Adrenal gland (tissue), 19 donors: ENCODE measurements at regions of chr12 and their contacts with region 1.

Region 1: GRCh38 chr12:109775172-109775881 is 57.9 kb downstream of the TRPV4 start:
- DNase-seq: peak; percentile 74 to 89 (median 81)
- H3K4me3 ChIP-seq: no peak overlapping the region
- H3K27ac ChIP-seq: no peak overlapping the region
- H3K4me1 ChIP-seq: peaks cover 0 to 20% of the 10 kb centered on the region in 2 donors
- H3K27me3 ChIP-seq: no peaks in the 10 kb centered on the region
- CTCF ChIP-seq: peak; percentile 73 to 91 (median 88)
- POLR2A ChIP-seq: no peak

Region 2: DNA sequence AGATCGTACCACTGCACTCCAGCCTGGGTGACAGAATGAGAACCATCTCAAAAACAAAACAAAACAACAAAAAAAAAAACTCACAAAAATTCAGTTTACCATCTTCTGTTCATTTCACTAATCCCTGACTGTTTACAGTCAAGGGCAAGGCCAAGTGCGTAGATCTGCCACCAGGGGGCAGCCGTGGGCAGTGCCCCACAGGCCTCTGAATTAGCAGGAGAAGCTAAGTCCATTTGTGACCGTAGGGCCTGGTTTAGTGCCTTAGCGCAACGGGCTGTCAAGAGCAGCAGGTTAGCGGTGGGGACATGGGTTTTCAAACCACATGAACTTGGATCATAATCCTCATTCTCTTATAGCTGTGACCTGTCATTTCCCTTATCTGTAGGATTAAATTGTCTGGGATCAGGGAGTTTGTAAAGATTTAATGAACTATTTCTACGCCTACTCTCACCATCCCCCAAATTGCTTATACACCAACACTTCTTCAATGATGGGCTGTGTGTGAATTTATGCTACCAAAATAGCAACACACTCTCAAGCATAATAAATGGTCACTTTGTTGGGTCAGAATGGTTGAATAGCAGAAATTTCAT is 347.2 kb before region 1 on chr12:
- intact Hi-C with region 1: loop called in 1 of 2 experiments (anchors 10 kb)
- DNase-seq: peak; percentile 76 to 93 (median 82)
- H3K4me3 ChIP-seq: no peak overlapping the region
- H3K27ac ChIP-seq: no peak overlapping the region
- H3K4me1 ChIP-seq: no peaks in the 10 kb centered on the region
- H3K27me3 ChIP-seq: no peaks in the 10 kb centered on the region
- CTCF ChIP-seq: peak; percentile 74 to 99 (median 90)
- POLR2A ChIP-seq: no peak

Region 3: DNA sequence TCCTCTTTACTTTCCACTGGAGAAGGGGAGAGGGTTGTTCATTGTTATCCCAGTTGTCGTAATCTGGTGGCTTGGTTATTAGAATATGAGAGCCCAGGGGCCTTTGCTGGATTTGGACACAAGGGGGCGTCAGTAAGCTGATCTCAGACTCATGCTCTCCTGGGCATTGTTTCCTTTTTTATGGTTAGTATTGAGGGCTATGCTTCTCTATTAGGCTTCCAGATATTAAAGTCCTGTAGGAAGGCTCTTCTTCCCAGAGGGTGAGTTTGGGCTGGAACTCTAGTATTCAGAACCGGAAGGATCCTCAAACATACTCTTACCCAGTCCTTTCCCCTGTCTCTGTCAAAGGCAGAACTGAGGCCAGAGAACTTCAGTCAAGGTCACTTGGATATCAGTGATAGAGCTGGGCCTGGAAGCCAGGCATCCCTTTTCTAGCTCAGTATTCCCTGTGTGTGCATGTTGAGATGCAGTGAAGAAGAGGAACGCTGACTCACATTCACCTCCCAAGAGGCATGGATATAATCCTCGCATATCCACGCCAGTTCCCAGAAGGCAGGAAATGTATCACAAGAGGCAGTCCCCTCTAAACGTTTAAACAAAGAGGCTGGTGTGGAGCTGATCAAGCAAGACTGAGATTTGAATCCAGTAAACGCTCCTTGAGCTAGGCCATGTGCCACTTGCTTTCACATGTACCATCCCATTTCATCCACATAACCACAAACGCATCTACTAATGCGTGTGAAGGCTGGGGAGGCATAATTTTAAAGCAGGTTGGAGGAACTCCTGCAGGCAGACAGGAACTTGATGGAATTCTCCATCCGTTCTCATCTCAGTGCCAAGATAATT is 256.3 kb before region 1 on chr12:
- intact Hi-C with region 1: loop called (anchors 5 to 10 kb)
- DNase-seq: peak; percentile 60 to 92 (median 75)
- H3K4me3 ChIP-seq: no peak overlapping the region
- H3K27ac ChIP-seq: peak overlapping the region in 2 of 5 donors; percentile 29 to 46
- H3K4me1 ChIP-seq: peaks cover 0 to 14% of the 10 kb centered on the region in 2 donors
- H3K27me3 ChIP-seq: no peaks in the 10 kb centered on the region
- CTCF ChIP-seq: peak; percentile 76 to 88 (median 80)
- POLR2A ChIP-seq: no peak

Region 4: DNA sequence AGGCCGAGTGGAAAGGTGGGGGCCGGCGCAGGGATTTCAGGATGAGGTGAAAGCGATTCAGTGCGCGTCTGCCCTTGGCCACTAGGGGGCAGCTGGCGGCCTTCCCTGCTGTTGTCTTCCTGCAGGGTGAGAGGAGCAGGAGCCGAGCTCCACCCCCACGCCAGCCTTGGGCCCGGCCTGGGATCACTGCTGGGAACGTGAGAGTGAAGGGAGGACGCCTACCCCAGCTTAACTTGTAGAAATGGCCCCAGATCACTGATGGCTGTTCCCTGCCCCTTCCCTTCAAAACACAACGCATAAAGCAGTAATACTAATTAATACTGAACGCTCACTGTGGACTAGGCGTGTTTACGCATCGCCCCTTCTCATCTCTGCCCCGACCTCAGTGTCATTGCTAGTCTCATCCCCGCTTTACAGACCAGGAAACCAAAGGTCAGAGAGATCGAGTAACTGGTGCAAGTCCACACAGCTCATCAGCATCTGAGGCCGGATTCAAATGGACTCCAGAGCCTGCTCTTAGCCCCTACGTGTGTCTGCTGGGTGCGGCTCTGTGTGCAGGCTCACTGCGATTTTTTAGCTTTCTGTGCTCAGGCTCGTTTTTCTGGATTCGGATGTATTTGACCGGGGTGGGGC is 177.4 kb before region 1 on chr12:
- intact Hi-C with region 1: loop called (anchors 2 kb)
- DNase-seq: peak; percentile 89 to 95 (median 93)
- H3K4me3 ChIP-seq: no peak overlapping the region
- H3K27ac ChIP-seq: peak overlapping the region in 1 of 5 donors; percentile 12
- H3K4me1 ChIP-seq: peaks cover 0 to 5% of the 10 kb centered on the region in 2 donors
- H3K27me3 ChIP-seq: no peaks in the 10 kb centered on the region
- CTCF ChIP-seq: peak; percentile 96 to 98 (median 96)
- POLR2A ChIP-seq: no peak

Region 5: DNA sequence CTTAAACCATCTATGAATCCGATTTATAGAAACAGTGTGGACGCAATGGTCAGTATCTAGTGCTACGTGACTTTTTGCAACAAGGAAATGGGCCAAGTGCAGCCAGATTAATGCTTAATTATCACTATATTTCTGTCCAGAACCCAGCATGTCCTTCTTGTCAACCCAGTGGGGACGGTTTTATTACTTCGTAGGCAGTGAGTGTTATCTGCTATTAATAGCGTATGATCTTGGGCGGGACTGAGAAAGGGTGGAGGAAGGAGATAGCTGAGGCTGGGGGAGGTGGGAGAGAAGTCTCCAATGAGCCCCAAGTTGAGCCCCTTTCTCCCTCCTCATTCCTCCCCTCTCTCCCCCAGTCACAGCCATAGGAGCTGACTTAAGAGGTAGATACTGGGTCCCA is 121.4 kb before region 1 on chr12:
- intact Hi-C with region 1: no loop called
- DNase-seq: no peak
- H3K4me3 ChIP-seq: no peak overlapping the region
- H3K27ac ChIP-seq: no peak overlapping the region
- H3K4me1 ChIP-seq: no peaks in the 10 kb centered on the region
- H3K27me3 ChIP-seq: no peaks in the 10 kb centered on the region
- CTCF ChIP-seq: no peak
- POLR2A ChIP-seq: no peak

Region 6: DNA sequence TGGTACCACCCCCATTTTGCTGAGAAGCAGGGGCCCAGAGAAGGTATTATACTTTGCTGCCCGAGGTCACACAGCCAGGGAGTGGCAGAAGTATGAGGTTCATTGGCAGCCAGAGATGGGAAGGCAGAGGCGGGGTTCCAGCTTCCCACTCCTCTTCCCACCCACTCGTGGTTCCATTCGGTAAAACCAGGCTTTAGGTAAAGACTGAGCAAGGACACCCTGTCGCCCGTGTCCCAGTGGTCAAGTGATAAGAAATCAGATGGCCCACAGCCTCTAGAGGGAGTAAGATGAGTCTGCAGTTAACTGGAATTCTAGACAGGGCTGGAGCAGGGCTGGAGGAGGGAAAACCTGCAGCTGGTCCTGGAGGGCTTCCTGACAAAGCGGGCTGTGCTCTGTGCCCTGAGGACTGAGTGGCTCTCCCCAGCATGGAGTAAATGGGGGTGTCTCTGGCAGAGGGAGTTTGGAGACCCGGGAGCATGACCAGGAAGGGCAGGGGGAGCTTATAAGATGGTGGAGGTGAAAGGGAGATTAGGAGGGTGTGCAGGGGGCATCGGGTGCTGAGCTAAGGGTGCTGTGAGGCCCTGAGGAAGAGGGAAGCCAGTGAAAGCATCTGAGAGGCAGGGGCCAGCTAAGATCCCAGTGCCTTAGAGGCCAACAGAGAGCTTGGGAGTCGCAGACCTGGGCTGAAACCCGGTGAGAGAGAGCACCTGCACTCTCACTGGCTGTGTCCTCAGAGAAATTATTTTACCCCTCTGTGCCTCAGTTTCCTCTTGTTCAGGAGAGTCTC is 55.9 kb before region 1 on chr12:
- intact Hi-C with region 1: loop called in 1 of 2 experiments (anchors 5 kb)
- DNase-seq: peak in 6 of 7 donors; percentile 54 to 81 (median 68)
- H3K4me3 ChIP-seq: no peak overlapping the region
- H3K27ac ChIP-seq: peak overlapping the region in 4 of 5 donors; percentile 64 to 89 (median 85)
- H3K4me1 ChIP-seq: peaks cover 70 to 91% of the 10 kb centered on the region in 2 donors
- H3K27me3 ChIP-seq: no peaks in the 10 kb centered on the region
- CTCF ChIP-seq: peak; percentile 24 to 57 (median 42)
- POLR2A ChIP-seq: peak in 1 of 2 donors; percentile 48

Region 7: DNA sequence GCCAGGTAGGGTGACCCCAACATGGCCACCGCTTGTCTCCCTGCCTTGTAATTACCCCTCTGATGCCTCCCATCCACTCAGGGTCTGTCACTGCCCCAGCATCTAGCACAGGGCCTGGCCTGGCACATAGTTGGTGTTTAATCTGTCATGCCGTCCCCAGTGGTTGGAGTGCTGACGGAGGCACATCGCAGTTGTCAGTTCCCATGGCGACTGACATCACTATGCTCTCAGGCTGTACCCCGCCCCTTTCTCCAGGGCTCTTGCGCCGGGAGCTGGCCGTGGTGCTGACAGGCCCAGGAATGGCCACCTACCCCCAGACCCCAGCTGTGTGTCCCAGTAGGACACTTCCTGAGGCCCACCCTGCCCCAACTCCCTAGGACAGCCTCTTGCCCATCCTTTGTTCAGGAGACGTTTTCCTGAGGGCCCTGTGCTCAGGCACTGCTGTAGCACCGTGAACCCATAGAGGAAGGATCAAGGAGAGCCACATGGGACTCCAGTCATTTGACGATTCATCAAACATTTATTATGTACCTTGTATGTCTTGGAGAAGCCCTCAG is 38.7 kb before region 1 on chr12:
- intact Hi-C with region 1: no loop called
- DNase-seq: peak; percentile 23 to 91 (median 45)
- H3K4me3 ChIP-seq: no peak overlapping the region
- H3K27ac ChIP-seq: peak overlapping the region in 2 of 5 donors; percentile 34 to 86
- H3K4me1 ChIP-seq: peaks cover 23 to 64% of the 10 kb centered on the region in 2 donors
- H3K27me3 ChIP-seq: no peaks in the 10 kb centered on the region
- CTCF ChIP-seq: no peak
- POLR2A ChIP-seq: no peak

Region 8: DNA sequence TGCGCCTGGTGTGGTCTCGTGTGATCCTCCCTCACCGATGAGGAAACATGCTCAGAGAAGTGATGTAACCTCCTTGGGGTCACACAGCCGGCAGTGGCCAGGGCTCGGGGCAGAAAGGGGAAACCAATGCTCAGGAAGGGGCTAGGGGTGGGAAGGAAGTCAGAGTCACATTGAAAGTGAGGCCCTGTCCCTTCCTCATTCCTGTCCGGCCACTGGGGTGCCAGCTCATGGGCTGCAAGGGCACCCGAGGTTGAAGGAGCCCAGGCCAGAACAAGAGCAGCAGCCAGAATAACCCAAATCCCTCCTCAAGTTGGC is 52.9 kb after region 1 on chr12:
- intact Hi-C with region 1: no loop called
- DNase-seq: peak; percentile 37 to 79 (median 65)
- H3K4me3 ChIP-seq: no peak overlapping the region
- H3K27ac ChIP-seq: peak overlapping the region in 3 of 5 donors; percentile 10 to 83 (median 65)
- H3K4me1 ChIP-seq: peaks cover 0 to 3% of the 10 kb centered on the region in 2 donors
- H3K27me3 ChIP-seq: no peaks in the 10 kb centered on the region
- CTCF ChIP-seq: no peak
- POLR2A ChIP-seq: no peak

Region 9: DNA sequence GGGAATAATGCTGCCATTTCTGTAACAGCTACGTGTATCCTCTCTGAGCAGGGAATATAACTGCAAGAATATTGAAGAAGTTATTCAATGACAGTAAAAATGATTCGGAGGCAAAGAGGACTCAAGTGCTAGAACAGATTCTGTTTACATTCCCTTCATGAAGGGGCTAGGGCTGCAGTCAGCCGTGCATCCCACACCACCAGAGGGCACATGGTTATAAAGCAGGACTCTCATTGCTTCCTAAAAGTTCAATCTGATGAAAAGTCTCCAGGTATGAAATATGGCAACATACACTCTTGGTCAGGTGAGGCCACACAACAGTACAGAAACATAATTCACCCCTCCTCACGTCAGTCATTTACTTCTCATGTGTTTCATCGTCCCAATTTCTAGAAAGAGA is 158.7 kb after region 1 on chr12:
- intact Hi-C with region 1: no loop called
- DNase-seq: no peak
- H3K4me3 ChIP-seq: no peak overlapping the region
- H3K27ac ChIP-seq: peak overlapping the region in 1 of 5 donors; percentile 58
- H3K4me1 ChIP-seq: no peaks in the 10 kb centered on the region
- H3K27me3 ChIP-seq: no peaks in the 10 kb centered on the region
- CTCF ChIP-seq: peak in 1 of 6 experiments; percentile 9
- POLR2A ChIP-seq: no peak